Gastrocnemius medialis (tissue), 4 donors: ENCODE measurements at regions of chr19 and their contacts with region 1.

Region 1: DNA sequence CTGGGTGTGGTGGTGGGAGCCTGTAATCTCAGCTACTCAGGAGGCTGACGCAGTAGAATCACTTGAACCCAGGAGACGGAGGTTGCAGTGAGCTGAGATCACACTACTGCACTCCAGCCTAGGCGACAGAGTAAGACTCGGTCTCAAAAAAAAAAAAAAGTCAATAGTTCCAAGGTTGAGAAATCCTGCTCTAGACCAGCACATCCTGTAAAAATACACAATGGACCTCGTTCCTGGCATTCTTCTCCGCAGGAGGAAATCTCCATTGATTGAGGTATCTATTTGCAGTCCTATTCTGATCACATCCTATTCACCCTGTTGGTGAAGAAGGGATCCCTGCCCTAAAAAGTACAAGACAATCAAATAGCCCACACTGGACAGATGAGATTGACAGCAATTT is 15.2 kb downstream of the ZFP14 start:
- DNase-seq: no peak
- ATAC-seq: no peak
- H3K4me3 ChIP-seq: no peak overlapping the region
- H3K27ac ChIP-seq: no peak overlapping the region
- H3K4me1 ChIP-seq: no peaks in the 10 kb centered on the region
- H3K27me3 ChIP-seq: no peaks in the 10 kb centered on the region
- CTCF ChIP-seq: no peak
- POLR2A ChIP-seq: no peak

Region 2: DNA sequence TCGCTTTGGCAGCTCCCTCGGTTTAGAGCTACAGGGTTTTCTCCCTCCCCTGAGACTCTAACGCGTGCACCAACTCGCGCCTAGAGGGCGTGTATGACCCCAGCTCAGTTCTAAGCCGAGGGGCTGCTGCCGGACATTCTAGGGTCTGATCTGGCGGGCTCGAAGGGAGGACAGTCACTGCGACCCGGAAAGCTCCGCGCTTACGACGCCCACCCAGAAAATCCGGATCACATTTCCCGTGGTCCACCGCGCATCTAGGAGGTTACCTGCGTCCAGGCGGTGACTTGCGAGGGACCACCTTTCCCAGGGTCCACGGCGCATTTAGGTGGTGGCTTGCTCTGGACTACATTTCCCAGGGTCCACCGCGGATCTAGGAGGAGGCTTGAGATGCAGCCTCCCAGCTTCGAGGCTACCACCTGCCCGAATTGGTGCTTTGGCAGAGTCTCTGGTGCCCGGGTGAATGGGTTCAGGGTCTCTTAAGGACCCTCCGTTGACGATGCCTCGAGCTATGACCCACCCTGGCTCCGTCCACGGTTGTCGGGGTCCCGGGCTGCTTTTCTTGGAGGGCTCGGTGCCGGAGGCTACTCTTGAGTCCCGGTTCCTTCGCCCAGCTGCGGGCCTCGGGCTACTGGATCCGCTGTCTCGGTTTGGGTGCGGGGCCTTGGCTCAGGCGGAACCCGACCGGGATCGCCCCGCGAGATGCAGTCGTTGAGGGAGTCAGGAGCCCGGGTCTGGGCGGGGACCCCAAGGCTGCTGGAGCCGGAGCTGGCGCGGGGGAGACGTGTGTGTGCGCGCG is 118.4 kb before region 1 on chr19:
- in situ Hi-C with region 1: loop called in 1 of 4 experiments (anchors 25 kb)
- intact Hi-C with region 1: no loop called
- DNase-seq: no peak
- ATAC-seq: no peak
- H3K4me3 ChIP-seq: peak overlapping the region; percentile 16 to 46 (median 28)
- H3K27ac ChIP-seq: no peak overlapping the region
- H3K4me1 ChIP-seq: no peaks in the 10 kb centered on the region
- H3K27me3 ChIP-seq: peaks cover 4 to 20% (median 18%) of the 10 kb centered on the region in 3 donors
- CTCF ChIP-seq: no peak
- POLR2A ChIP-seq: no peak

Region 3: GRCh38 chr19:36527341-36527740 is 163.5 kb after region 1 on chr19:
- in situ Hi-C with region 1: no loop called
- intact Hi-C with region 1: no loop called
- DNase-seq: no peak
- ATAC-seq: no peak
- H3K4me3 ChIP-seq: peak overlapping the region; percentile 71 to 83 (median 80)
- H3K27ac ChIP-seq: peak overlapping the region; percentile 83 to 94 (median 90)
- H3K4me1 ChIP-seq: peaks cover 16 to 17% of the 10 kb centered on the region in 2 donors
- H3K27me3 ChIP-seq: no peaks in the 10 kb centered on the region
- CTCF ChIP-seq: no peak
- POLR2A ChIP-seq: no peak